Right lobe of liver (tissue), 6 donors: ENCODE measurements at regions of chr13 and their contacts with region 1.

Region 1: DNA sequence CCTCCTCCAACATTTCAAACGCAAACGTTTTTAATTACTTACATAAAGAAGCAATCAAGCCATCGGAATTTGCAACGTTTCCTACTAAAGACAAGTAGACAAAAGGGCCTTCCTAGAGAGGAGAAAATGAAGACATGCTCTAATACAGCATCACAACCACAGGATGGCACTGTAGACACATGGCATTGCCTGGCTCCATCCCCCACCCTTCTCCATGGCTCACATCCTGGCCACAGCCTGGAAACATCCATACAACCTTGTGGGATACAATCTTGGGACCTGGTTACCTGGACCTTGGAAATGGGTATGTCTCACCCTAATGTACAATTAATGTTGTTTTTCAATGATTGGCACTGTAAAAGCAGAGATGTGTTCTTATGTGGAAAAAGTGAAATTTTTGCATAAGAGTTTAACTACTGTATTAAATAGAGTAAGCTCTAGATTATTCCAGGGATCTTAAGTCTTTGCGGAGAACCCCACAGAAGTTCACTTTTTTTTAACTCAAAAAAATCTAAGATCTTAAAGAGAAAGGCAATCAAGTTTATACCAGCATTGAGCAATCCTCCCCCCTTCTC is 21.5 kb downstream of the EBPL start:
- DNase-seq: peak in 2 of 3 donors; percentile 52 to 63
- ATAC-seq: peak; percentile 97 to 98 (median 98)
- H3K4me3 ChIP-seq: no peak overlapping the region
- H3K27ac ChIP-seq: no peak overlapping the region
- H3K4me1 ChIP-seq: peaks cover 0 to 10% (median 2%) of the 10 kb centered on the region in 4 donors
- H3K27me3 ChIP-seq: no peaks in the 10 kb centered on the region
- CTCF ChIP-seq: peak; percentile 60 to 81 (median 76)
- POLR2A ChIP-seq: no peak

Region 2: GRCh38 chr13:49792550-49793324 is 122.9 kb after region 1 on chr13 and contains the start of gene KPNA3:
- intact Hi-C with region 1: loop called in 1 of 2 experiments (anchors 10 kb)
- DNase-seq: peak; percentile 97 to 98 (median 98)
- ATAC-seq: peak; percentile 92 to 96 (median 92)
- H3K4me3 ChIP-seq: peak within 1 kb of the TSS; percentile 90 to 96 (median 94)
- H3K27ac ChIP-seq: peak within 1 kb of the TSS; percentile 76 to 92 (median 86)
- H3K4me1 ChIP-seq: peaks cover 0 to 14% (median 4%) of the 10 kb centered on the region in 4 donors
- H3K27me3 ChIP-seq: no peaks in the 10 kb centered on the region
- CTCF ChIP-seq: peak in 3 of 4 donors; percentile 16 to 43 (median 32)
- POLR2A ChIP-seq: peak; percentile 86
- total RNA-seq, gene KPNA3: 16.3 to 27.2 (median 19.5) TPM

Region 3: GRCh38 chr13:49840266-49840665 is 170.4 kb after region 1 on chr13:
- intact Hi-C with region 1: loop called in 1 of 2 experiments (anchors 10 kb)
- DNase-seq: no peak
- ATAC-seq: no peak
- H3K4me3 ChIP-seq: no peak overlapping the region
- H3K27ac ChIP-seq: no peak overlapping the region
- H3K4me1 ChIP-seq: no peaks in the 10 kb centered on the region
- H3K27me3 ChIP-seq: no peaks in the 10 kb centered on the region
- CTCF ChIP-seq: no peak
- POLR2A ChIP-seq: no peak

Region 4: GRCh38 chr13:49877629-49878218 is 207.9 kb after region 1 on chr13:
- intact Hi-C with region 1: no loop called
- DNase-seq: no peak
- ATAC-seq: no peak
- H3K4me3 ChIP-seq: no peak overlapping the region
- H3K27ac ChIP-seq: no peak overlapping the region
- H3K4me1 ChIP-seq: no peaks in the 10 kb centered on the region
- H3K27me3 ChIP-seq: no peaks in the 10 kb centered on the region
- CTCF ChIP-seq: no peak
- POLR2A ChIP-seq: no peak